Cardiac septum (tissue), 1 donor: ENCODE measurements at regions of chr1 and their contacts with region 1.

Region 1: DNA sequence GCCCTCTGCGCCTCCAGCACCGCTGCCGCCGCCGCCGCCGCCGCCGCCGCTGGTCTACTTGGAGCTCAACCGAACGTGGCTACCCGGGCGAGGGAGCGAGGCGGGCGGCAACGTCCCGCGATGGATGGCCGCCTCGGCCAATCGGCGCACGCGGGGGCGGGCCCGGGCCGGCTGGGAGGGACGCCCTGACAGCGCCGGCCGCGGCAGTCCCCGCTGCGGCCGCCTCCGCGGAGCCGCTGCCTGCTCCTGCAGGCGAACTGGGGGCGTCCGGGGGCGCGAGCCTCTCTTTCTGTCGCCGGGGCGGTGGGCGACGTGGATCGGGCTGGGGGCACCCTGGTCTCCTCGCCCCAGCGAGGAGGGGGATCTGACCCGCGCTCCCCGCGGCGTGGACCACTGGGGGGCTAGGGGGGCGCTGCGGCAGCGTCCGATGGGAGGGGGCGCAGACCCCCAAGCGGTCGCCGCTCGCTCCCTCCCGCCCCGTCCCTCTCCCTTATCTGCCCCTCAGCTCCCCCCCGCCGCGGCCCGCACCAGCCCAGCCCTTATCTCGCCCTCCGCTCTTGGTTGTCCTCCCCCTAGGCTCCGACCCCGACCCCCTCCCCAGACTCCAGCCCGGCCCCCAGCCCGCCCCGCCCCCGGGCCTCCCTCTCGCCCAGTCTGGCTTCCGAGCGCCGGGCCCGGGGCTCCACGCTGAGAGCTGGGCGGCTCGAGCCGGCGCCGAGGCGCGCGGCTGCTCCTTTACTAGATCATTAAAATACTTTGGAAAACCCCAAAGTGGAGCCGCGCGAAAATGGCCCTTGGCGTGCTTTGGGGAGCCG is at the start of gene SSBP3:
- DNase-seq: peak; percentile 97
- total RNA-seq, gene SSBP3: 45.4 TPM

Region 2: GRCh38 chr1:53889304-53890298 is 516.9 kb before region 1 on chr1 and contains the start of gene YIPF1:
- intact Hi-C with region 1: loop called (anchors 10 kb)
- DNase-seq: peak; percentile 96
- total RNA-seq, gene YIPF1: 13.4 TPM

Region 3: DNA sequence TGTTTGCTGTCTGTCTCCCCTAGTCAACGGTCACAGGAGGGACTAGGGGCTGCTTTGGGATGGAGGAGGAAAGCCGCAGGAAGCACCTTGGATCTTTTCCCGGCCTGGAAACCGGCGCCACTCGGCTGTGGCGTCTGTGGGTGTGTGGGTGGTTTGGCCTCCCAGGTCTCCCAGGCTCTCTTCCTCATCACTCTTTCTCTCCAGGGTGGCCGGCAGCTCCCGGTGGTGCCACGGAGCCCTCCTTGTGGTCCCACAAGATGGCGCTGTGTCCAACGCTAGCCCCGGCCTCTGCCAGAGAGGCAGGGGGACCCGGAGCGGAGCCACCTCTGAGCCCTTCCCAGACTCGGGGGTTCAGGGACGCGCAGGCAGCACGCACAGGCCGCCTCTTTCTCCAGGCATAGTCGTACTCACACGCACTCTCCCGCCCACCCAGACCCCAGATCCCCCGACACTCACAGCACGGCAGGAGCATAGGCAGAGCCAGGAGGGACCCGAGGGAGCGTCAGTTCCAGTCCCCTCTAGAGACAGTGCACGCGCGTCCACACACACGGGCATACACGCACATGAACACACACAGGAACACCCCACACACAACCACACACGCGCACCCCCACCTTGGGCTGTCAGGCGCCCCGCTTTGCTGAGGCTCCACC is 284.9 kb before region 1 on chr1:
- intact Hi-C with region 1: loop called (anchors 5 kb)
- DNase-seq: no peak

Region 4: DNA sequence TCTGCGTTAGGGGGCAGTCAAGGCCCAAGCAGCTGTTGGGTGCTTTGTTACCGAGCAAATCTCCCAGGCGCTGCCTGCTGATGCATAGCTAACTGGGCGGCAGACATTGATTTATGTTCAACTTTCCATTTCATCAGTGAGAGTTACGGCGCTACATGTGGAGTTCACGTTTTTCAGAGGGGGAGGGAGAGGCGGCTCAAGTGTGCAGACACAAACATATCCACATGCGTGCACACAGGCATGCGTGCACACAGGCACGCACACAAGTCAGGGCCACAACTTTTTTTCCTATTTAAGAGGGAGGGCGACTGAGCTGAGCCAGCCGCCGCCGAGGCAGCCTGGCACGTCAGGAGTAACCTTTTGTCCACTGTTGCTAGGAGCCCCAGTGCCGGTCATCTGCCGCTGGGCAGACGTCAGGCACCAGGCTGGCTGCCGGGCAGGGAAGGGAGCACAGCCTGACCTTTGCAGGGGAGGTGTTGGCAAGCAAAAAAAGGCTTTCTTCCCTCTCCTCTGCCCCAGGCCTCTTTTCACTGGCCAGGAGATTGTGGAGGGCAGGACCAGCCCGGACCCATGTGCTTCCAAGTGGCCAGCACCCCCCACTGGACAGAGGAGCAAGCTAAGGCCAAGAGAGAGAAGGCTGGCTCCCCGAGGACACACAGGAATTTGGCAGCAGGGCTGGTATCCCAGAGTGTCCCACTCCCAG is 133.3 kb before region 1 on chr1:
- intact Hi-C with region 1: loop called (anchors 2 kb)
- DNase-seq: no peak

Region 5: DNA sequence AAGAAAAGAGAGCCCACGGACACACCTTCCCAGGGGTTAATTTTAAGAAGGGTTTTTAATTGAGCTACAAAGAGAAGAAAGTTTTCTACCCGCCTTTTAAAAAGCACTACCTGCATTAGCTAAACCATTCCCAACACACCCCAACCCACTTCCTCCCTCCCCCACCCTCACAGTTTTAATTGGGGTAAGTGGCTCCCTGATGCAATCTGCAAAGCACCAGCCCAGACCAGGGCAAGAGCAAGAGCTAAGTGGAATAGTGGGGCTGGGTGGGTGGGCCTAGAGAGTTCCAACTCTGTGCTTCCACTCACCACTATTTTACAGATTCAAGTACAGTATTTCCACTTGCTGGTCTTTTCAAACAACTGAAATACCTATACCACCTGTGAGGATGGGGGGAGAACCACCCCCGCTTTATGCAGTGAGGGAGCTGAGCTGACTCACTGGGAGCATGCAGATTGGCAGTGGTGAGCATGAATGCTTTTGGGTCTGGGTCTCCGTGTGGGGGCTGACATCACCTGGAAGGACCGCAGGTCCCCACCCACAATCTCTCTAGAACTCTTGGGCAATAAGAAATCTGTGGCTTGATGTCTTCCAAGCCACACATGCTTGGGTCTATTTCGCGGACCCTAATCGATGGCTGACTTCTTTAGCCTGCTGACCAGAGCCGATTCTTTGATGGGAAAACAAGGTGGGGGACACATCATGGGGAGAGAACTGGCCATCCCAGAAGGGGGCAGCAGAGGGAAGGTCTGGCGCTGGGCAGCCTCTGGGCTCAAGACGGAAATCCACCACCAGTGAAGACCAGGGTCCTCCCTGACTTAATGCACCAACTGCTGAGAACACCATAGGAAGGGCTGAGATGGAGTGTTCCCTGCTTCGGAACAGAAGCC is 95.9 kb before region 1 on chr1:
- intact Hi-C with region 1: loop called (anchors 10 kb)
- DNase-seq: peak; percentile 84

Region 6: GRCh38 chr1:54335755-54336108 is 70.8 kb before region 1 on chr1:
- intact Hi-C with region 1: loop called (anchors 2 kb)
- DNase-seq: peak; percentile 83

Region 7: GRCh38 chr1:54355931-54356679 is 50.4 kb before region 1 on chr1:
- intact Hi-C with region 1: loop called (anchors 2 kb)
- DNase-seq: no peak

Region 8: GRCh38 chr1:54439550-54440223 is 33.1 kb after region 1 on chr1:
- intact Hi-C with region 1: no loop called
- DNase-seq: no peak

Region 9: DNA sequence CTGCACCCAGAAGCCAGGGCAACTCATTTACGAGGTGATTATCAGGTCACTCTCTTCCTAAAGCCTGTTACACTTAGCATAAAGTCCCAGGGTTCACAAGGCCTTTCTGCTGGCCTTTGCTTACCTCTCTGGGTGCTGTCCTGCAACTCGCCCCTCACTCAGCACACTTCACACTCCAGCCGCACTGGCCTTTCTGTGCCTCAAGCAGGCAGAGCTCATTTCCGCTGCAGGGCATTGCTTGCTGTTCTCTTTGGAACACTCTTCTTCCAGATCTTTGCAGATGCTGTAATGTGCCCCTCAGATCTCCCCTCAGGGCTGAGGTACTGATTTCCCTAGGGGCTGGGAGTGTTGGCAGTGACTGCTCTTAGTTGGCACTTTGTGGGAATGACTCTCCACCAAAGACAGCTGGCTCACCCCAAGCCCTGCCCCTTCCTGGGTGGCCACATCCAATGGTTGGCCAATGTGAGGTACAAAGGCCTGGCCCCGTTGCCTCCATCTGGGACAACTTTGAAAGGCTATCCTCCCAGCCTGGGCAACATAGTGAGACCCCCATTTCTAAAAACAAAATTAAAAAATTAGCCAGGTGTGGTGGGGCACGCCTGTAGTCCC is 50.5 kb after region 1 on chr1:
- intact Hi-C with region 1: no loop called
- DNase-seq: no peak